Left cardiac atrium (tissue), 4 donors: ENCODE measurements at regions of chr15 and their contacts with region 1.

Region 1: DNA sequence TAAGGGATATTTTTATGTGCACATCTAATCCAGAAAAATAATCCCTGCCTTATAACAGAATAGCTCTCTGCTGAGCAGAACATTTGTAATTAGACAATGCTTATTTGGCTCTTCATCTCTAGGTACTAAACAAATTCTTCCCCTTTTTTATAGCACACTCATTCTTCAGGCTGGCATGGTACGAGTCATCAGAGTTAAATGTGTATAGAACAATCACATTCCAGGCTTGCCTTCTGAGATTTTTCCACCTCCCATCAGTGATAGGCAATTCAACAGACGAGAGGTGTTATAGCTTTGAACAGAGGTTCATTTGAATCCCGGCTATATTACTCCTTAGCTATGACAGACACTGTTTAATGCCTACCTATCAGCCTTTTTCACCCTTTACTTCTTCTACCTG is 21.4 kb upstream of the SPPL2A start:
- DNase-seq: no peak
- ATAC-seq: no peak

Region 2: DNA sequence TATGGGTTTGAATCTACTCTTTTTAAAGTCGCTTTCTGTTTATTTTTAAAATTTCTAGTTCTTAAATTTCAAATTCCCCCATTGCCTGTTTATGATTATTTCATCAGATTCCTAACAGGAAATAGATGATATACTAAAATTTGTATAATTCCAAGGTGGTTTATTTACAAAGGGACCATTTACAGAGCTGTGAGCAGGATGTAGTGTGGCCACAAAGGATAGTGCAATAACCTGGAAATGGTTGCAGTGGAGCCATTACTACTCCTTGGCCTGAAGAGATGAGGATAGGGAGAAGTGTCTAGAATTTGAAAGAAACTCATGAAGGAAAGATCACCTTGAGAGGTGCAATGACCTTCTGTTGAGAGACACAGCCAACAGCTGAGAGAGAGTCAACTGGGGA is 63.1 kb after region 1 on chr15:
- intact Hi-C with region 1: no loop called
- DNase-seq: no peak
- ATAC-seq: no peak

Region 3: DNA sequence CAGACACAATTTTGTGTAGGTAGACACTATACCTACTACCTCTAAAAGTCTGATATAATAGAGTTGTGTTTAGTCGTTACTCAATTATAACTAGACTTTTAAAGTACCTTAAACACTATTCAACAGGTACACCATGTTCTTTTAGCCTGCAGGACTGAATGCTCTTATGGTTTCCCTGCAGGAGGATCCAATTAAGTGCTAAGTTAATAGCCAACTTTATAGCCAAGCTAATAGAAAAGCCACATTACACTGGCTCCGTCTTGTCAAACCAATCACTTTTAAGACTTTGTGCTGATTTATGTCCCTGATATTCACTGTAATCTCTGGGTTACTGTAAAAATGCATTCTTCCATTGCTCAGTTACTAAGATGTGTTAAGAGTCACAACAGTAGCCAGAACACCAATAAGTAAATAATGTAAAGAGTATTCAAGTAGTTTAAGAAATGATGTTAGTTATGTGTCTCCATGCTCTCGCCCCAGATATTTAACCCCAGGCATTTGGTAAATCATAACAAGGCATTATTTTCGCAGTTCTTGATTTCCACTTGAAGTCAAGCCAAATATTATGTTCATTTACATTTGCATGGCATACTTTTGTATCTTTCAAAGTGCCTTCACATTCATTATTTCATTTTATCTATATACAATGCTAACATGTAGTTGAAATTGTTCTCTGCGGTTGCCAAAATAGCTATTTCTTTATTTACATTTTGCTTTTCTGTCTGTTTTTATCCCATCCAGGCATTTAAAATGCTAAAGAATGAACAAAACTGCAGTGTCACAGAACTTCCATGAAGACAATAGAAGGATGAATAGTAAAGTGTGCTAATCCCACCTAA is 78.9 kb after region 1 on chr15:
- intact Hi-C with region 1: loop called in 1 of 2 experiments (anchors 10 kb)
- DNase-seq: no peak
- ATAC-seq: no peak